ENCODE measurements at regions of chrX and their contacts with region 1.

Region 1: DNA sequence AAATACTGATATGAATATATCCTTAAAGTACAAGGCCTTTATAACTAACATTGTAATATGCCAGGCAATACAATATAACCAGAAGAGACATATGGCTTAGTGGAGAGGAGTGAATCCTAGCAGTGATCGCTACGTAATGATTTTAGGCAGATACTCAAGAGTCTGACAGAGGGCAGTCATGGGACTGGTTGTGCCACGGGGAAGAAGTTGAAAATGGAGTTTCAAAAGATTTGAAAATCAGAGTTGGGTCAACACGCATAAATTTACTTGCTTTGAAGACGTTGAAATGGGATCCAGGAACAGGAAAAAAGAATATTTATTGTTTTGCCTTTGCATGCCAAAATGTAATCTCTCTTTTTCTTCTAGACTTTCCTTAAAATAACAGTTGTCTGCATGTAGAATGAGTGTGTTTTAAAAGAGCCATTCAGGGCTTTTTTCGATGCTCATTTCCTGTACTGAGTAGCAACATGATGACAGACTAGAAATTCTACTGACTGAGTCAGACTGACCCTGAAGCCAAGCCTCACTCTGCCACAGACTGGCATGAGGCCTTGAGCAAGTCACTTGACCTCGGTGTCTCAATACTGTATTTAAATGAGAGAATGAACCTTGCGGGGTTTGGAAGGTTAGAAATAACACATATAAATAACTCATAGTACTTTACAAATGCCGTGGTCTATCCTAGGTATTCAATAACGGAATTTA is 8.1 kb upstream of the SMS start:
- DNase-seq: no peak
- ATAC-seq: no peak
- H3K4me3 ChIP-seq: no peak overlapping the region
- H3K27ac ChIP-seq: no peak overlapping the region
- H3K4me1 ChIP-seq: no peaks in the 10 kb centered on the region; a peak in 1 of 5 replicates
- H3K27me3 ChIP-seq: no peaks in the 10 kb centered on the region
- CTCF ChIP-seq: no peak
- EP300 ChIP-seq: no peak
- POLR2A ChIP-seq: no peak
- RAD21 ChIP-seq: no peak

Region 2: GRCh38 chrX:21972721-21973120 is 40.3 kb after region 1 on chrX:
- CTCF ChIA-PET with region 1: no interaction called
- POLR2A ChIA-PET with region 1: no interaction called
- in situ Hi-C with region 1: no loop called
- intact Hi-C with region 1: loop called (anchors 5 kb)
- DNase-seq: no peak
- ATAC-seq: peak; percentile 83
- H3K4me3 ChIP-seq: no peak overlapping the region
- H3K27ac ChIP-seq: no peak overlapping the region
- H3K4me1 ChIP-seq: peaks cover 0 to 3% of the 10 kb centered on the region in 2 experiments; a peak in 3 of 5 replicates
- H3K27me3 ChIP-seq: no peaks in the 10 kb centered on the region
- CTCF ChIP-seq: peak in 2 of 3 experiments; percentile 16 to 24; a peak in 1 of 6 replicates
- EP300 ChIP-seq: no peak
- POLR2A ChIP-seq: no peak
- RAD21 ChIP-seq: 0 out of 4 replicates have a peak, but pooled peaks of 1 of the 2 experiments have one; percentile 23

Region 3: GRCh38 chrX:22004866-22005265 is 72.4 kb after region 1 on chrX:
- CTCF ChIA-PET with region 1: no interaction called
- POLR2A ChIA-PET with region 1: no interaction called
- in situ Hi-C with region 1: no loop called
- intact Hi-C with region 1: no loop called
- DNase-seq: no peak
- ATAC-seq: no peak
- H3K4me3 ChIP-seq: no peak overlapping the region
- H3K27ac ChIP-seq: no peak overlapping the region
- H3K4me1 ChIP-seq: no peaks in the 10 kb centered on the region
- H3K27me3 ChIP-seq: no peaks in the 10 kb centered on the region
- CTCF ChIP-seq: no peak
- EP300 ChIP-seq: no peak
- POLR2A ChIP-seq: no peak
- RAD21 ChIP-seq: no peak

Measured in K562 (cell line).